ENCODE measurements at regions of chr11 and their contacts with region 1.

Region 1: DNA sequence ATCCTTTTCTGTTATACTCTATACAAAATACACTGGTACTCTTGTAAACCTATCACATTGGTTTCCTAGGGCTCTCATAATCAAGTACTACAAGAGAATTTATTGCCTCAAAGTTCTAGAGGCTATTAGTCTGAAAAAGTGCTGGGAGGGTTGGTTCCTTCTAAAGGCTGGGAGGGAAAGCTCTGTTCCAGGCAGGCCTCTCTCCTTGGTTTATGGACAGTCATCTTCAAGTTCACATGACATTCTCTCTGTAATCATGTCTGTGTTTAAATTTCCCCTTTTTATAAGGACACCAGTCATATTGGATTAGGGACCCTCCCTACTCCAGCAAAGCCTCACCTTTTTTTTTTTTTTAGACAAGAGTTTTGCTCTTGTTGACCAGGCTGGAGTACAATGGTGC is 9.1 kb downstream of the SLC36A4 start:
- DNase-seq: no peak
- H3K4me3 ChIP-seq: no peak overlapping the region
- H3K27ac ChIP-seq: no peak overlapping the region
- H3K4me1 ChIP-seq: no peaks in the 10 kb centered on the region
- H3K27me3 ChIP-seq: no peaks in the 10 kb centered on the region
- CTCF ChIP-seq: no peak

Region 2: GRCh38 chr11:92931746-92932422 is 256.8 kb before region 1 on chr11:
- CTCF ChIA-PET with region 1: no interaction called
- dilution Hi-C with region 1: loop called (anchors 25 kb)
- in situ Hi-C with region 1: loop called in 1 of 2 experiments (anchors 10 kb)
- intact Hi-C with region 1: no loop called
- DNase-seq: peak; percentile 5
- H3K4me3 ChIP-seq: no peak overlapping the region
- H3K27ac ChIP-seq: no peak overlapping the region
- H3K4me1 ChIP-seq: no peaks in the 10 kb centered on the region
- H3K27me3 ChIP-seq: no peaks in the 10 kb centered on the region
- CTCF ChIP-seq: no peak

Region 3: GRCh38 chr11:93288079-93288478 is 99.4 kb after region 1 on chr11:
- CTCF ChIA-PET with region 1: no interaction called
- dilution Hi-C with region 1: no loop called
- in situ Hi-C with region 1: no loop called
- intact Hi-C with region 1: no loop called
- DNase-seq: no peak
- H3K4me3 ChIP-seq: no peak overlapping the region
- H3K27ac ChIP-seq: no peak overlapping the region
- H3K4me1 ChIP-seq: no peaks in the 10 kb centered on the region
- H3K27me3 ChIP-seq: no peaks in the 10 kb centered on the region
- CTCF ChIP-seq: no peak

Region 4: GRCh38 chr11:93370260-93370659 is 181.5 kb after region 1 on chr11:
- CTCF ChIA-PET with region 1: no interaction called
- dilution Hi-C with region 1: no loop called
- in situ Hi-C with region 1: no loop called
- intact Hi-C with region 1: no loop called
- DNase-seq: peak; percentile 49
- H3K4me3 ChIP-seq: no peak overlapping the region
- H3K27ac ChIP-seq: no peak overlapping the region
- H3K4me1 ChIP-seq: no peaks in the 10 kb centered on the region
- H3K27me3 ChIP-seq: no peaks in the 10 kb centered on the region
- CTCF ChIP-seq: no peak

Measured in mammary epithelial cell (primary cell).